ENCODE measurements at regions of chr1 and their contacts with region 1.

Region 1: DNA sequence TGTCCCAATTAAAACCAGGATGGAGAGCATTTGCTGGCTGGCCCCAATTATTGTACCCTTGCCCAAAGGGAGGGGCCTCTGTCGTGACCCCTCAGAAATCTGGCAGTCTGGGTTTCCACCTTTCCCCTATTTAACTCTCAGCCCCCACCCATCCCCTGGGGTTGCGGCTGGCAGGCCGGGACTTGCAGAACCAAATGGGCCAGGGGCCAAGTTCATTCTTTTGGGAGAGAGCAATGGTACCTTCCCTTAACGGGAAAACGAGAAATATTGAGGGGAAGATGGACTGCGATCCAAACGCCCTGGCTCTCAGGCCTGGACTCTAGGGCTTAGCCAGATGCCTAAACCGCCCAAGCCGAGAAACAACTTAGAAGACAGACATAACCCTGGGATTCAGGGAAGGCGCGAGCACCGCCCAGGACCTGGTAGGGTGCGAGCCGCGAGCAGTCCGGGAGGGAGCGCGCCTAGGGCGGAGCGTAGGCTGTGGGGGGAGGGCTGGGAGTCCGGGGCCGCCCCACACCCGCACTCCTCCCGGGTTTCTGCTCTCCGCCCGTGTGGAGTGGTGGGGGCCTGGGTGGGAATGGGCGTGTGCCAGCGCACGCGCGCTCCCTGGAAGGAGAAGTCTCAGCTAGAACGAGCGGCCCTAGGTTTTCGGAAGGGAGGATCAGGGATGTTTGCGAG is at the start of gene SLC27A3:
- DNase-seq: peak; percentile 89
- ATAC-seq: peak; percentile 87
- total RNA-seq, gene SLC27A3: 9.8 TPM

Region 2: GRCh38 chr1:153677718-153678505 is 97.0 kb before region 1 on chr1:
- intact Hi-C with region 1: loop called (anchors 5 kb)
- DNase-seq: peak; percentile 61
- ATAC-seq: peak; percentile 78

Measured in left ventricle myocardium superior (tissue), 1 donor.